Heart left ventricle (tissue), 16 donors: ENCODE measurements at regions of chr2 and their contacts with region 1.

Region 1: DNA sequence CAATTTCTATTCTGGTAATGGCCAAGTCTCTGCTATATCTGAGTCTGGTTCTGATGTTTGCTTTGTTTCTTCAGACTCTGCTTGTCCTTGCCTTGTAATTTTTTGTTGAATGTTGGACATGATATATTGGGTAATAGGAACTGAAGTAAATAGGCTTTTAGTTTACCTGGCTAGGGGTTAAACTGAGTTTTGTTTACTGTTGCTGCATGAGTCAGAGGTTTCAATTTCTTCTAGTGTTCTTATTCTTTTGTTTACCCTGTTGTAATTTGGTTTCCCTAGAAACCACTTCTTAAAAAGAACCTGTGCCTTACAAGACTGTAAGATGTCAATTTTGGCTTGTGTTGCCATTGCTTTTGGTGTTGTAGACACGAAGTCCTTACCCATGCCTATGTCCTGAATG is 285.0 kb upstream of the KCNH7 start:
- DNase-seq: no peak
- ATAC-seq: no peak
- H3K4me3 ChIP-seq: no peak overlapping the region
- H3K27ac ChIP-seq: no peak overlapping the region
- H3K4me1 ChIP-seq: peaks cover 0 to 4% (median 0%) of the 10 kb centered on the region in 12 donors
- H3K27me3 ChIP-seq: peaks cover 0 to 6% (median 0%) of the 10 kb centered on the region in 9 donors
- CTCF ChIP-seq: no peak
- POLR2A ChIP-seq: no peak

Region 2: DNA sequence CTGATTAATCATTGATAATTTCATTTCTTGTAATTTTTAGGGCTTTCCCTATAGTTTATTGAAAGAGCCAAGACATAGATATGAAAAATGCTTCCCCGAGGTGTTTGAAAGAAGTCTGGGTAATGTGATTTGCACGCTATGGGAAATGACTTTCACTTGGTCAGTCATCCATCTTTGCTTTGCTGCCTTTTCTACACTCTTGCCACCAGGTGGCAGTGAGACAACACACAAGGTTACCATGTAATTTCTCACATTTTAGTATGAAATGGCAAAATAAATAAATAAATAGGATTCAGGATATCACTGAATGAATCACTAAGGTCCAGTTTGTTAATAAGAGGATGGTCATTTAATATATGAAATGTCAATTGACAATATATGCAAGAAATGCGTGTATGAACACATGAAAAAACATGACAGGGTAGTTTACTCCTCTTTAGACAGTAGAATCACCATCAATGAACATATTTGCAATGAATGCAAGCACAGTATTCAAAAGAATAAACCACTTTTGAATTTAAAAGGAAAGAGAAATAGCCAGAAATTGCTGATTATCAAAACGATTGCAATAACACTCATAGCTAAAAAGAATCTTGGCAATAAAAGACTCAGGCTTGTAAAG is 232.7 kb before region 1 on chr2:
- intact Hi-C with region 1: loop called in 1 of 10 experiments (anchors 10 kb)
- DNase-seq: no peak
- ATAC-seq: no peak
- H3K4me3 ChIP-seq: no peak overlapping the region
- H3K27ac ChIP-seq: no peak overlapping the region
- H3K4me1 ChIP-seq: no peaks in the 10 kb centered on the region
- H3K27me3 ChIP-seq: no peaks in the 10 kb centered on the region
- CTCF ChIP-seq: peak in 10 of 12 donors; percentile 16 to 51 (median 43)
- POLR2A ChIP-seq: no peak

Region 3: DNA sequence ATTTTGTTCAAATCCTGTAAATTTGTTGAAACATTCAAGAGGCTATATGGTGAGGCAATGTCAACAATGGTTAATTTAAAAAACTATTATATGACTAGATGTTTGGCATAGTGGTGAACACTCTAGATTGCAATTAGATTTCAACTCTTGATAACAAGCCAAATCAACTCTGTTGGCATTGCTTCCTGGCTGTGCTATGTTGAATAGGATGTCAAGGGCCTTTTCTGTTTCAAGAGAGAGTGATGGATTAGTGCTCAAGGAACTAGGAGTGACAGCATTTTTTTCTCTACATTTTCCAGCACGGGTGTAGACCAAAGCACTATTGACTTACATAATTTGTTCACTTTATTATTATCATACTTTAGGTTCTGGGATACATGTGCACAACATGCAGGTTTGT is 112.5 kb before region 1 on chr2:
- intact Hi-C with region 1: no loop called
- DNase-seq: no peak
- ATAC-seq: no peak
- H3K4me3 ChIP-seq: no peak overlapping the region
- H3K27ac ChIP-seq: no peak overlapping the region
- H3K4me1 ChIP-seq: no peaks in the 10 kb centered on the region
- H3K27me3 ChIP-seq: no peaks in the 10 kb centered on the region
- CTCF ChIP-seq: no peak
- POLR2A ChIP-seq: no peak

Region 4: DNA sequence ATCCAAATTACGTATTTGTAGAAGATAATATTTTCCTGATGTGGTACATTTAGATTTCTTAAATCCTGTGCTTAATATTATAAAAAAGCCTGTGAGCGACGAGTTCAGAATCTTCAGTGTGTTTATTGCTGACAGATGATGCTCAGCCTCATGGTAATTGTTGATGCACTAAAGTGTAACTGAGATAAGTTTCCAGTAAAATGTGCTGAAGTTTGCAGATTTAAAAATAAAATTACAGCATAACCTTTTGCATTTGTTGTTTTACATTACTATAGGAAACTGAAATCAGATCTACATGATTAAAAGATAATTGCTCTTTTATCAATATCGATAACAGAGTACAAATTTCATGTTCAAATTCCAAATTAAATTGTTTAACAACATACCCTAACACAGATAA is 304.7 kb after region 1 on chr2:
- intact Hi-C with region 1: no loop called
- DNase-seq: no peak
- ATAC-seq: no peak
- H3K4me3 ChIP-seq: no peak overlapping the region
- H3K27ac ChIP-seq: no peak overlapping the region
- H3K4me1 ChIP-seq: no peaks in the 10 kb centered on the region
- H3K27me3 ChIP-seq: no peaks in the 10 kb centered on the region
- CTCF ChIP-seq: no peak
- POLR2A ChIP-seq: no peak